Activated CD4-positive, alpha-beta memory T cell treated with anti-CD3 and anti-CD28 coated beads for 36 hours (primary cell): ENCODE measurements at regions of chr19 and their contacts with region 1.

Region 1: DNA sequence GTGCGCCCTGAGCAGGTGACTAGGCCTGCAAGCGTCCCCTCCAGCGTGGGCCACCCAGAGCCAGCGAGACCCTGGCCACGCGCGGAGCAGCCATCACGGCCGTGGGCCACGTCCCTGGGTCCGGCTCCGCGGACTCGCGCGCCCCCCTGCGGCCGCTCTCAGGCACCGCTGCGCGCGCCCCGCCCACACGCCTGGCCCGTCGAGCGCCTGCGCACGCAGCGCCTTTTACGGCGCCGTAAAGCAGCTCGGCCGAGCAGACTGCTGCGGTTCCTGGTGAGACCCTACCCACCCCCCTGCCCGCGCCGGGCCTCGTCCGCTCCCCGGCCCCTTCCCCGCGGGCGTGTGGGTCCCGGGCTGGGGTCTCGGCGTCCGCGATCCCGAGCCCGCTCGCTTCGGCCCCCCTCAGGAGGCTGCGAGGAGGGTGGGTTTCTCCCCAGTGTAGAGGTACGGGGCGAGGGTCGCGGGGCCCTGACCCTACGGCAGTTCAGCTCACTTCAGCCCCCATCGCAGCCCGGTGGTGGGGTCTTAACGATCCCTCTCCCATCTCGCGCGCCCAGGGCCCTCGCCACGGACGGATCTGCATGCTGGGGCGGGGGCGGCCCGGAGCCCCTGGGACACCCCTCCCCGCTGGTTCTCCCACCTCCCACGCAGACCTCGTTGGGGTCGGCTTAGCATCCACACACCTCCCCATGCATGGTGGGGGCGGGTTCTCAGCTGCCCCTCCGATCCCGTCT is at the start of gene TRAPPC5:
- DNase-seq: peak; percentile 91
- H3K4me3 Mint-ChIP-seq: peak within 1 kb of the TSS; percentile 88
- H3K27ac Mint-ChIP-seq: peak within 1 kb of the TSS; percentile 91
- H3K4me1 Mint-ChIP-seq: peaks cover 44% of the 10 kb centered on the region
- H3K27me3 Mint-ChIP-seq: peaks cover 23% of the 10 kb centered on the region
- total RNA-seq, gene TRAPPC5: 77.5 to 88.2 TPM

Region 2: GRCh38 chr19:7386308-7386707 is 294.5 kb before region 1 on chr19:
- CTCF ChIA-PET with region 1: interaction called, 11 read pairs
- POLR2A ChIA-PET with region 1: no interaction called
- intact Hi-C with region 1: loop called (anchors 10 kb)
- DNase-seq: peak; percentile 67
- H3K4me3 Mint-ChIP-seq: no peak overlapping the region
- H3K27ac Mint-ChIP-seq: peak overlapping the region; percentile 96
- H3K4me1 Mint-ChIP-seq: peaks cover 30% of the 10 kb centered on the region
- H3K27me3 Mint-ChIP-seq: no peaks in the 10 kb centered on the region

Region 3: GRCh38 chr19:7636691-7637373 is 43.9 kb before region 1 on chr19 and contains the start of gene STXBP2:
- CTCF ChIA-PET with region 1: interaction called, 9 read pairs
- POLR2A ChIA-PET with region 1: no interaction called
- intact Hi-C with region 1: loop called (anchors 5 kb)
- DNase-seq: peak; percentile 95
- H3K4me3 Mint-ChIP-seq: peak within 1 kb of the TSS; percentile 79
- H3K27ac Mint-ChIP-seq: peak within 1 kb of the TSS; percentile 79
- H3K4me1 Mint-ChIP-seq: peaks cover 29% of the 10 kb centered on the region
- H3K27me3 Mint-ChIP-seq: no peaks in the 10 kb centered on the region
- total RNA-seq, gene STXBP2: 109 to 111 TPM

Region 4: GRCh38 chr19:7658219-7658686 is 22.5 kb before region 1 on chr19:
- CTCF ChIA-PET with region 1: interaction called, 33 read pairs
- POLR2A ChIA-PET with region 1: no interaction called
- intact Hi-C with region 1: no loop called
- DNase-seq: peak; percentile 69
- H3K4me3 Mint-ChIP-seq: peak overlapping the region; percentile 65
- H3K27ac Mint-ChIP-seq: no peak overlapping the region
- H3K4me1 Mint-ChIP-seq: peaks cover 16% of the 10 kb centered on the region
- H3K27me3 Mint-ChIP-seq: no peaks in the 10 kb centered on the region

Region 5: DNA sequence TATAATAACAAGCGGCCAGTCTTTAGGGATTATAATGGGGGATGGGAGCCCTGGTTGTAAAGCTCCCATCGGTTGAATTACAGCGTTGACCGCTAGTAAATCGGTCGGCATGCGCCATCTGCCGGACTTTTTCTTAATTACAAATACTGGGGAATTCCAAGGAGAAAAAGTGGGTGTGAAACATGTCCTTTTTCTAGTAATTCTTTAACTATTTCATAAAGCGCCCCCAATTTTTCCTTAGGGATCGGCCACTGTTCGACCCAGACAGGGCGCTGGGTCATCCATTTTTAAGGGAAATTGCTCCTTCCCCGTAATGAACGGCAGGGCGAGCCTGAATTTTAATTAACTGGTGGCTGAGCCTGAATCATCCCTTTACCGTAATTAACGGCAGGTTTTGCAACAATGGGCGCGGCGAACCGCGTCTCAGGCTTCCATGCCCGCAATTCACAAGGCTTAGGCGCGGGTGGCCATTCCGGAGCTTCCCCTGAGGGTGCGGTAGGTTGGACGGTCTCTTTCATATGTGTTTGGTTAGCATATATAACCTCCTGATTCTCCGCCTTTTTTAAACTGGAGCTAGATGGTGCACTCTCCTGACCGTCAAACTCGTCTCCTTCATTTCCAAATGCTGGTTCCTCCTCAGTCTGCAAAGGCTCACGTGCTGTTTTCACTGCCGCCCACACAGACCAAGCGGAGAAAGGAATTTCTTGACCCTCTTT is 119.0 kb after region 1 on chr19:
- CTCF ChIA-PET with region 1: interaction called, 62 read pairs
- POLR2A ChIA-PET with region 1: interaction called, 3 read pairs
- intact Hi-C with region 1: loop called (anchors 1 kb)
- DNase-seq: peak; percentile 69
- H3K4me3 Mint-ChIP-seq: peak overlapping the region; percentile 39
- H3K27ac Mint-ChIP-seq: no peak overlapping the region
- H3K4me1 Mint-ChIP-seq: peaks cover 7% of the 10 kb centered on the region
- H3K27me3 Mint-ChIP-seq: peaks cover 25% of the 10 kb centered on the region

Region 6: DNA sequence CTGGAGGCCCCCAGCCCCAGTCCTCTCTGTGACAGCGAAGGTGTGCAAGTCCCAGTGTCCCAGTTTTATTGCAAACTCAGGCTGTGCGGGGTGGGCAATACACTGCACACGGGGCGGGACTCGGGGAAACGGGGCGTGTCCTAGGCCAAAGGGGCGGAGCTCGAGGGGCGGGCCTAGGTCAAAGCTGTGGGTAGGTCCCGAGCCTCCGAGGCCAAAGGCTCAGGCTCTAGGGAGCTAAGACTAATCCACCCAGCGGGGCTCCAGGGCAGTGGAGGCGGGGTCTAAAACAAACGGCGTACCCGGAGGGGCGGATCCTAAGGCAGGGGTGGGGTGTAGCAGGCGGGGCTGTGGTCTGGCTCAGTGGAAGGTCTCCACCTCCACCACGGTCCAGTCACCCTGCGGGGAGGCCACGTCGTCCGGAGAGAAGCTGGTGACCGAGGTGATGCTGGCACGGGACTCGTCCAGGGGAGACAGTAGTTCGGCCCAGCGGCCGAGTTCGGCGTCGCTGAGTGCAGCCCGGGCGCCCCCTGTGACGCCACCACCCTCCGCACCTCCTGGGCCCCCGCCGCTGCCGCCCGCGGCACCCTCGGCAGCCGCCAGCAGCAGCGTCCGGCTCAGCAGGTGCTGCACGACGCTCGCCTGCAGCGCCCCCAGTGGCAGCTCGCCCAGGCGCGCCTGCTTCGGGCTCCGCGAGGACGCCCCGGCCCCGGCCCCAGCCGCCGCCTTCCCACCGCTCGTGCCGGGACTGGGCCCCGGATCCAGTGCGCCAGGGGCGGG is 188.1 kb after region 1 on chr19:
- CTCF ChIA-PET with region 1: interaction called, 13 read pairs
- POLR2A ChIA-PET with region 1: no interaction called
- intact Hi-C with region 1: no loop called
- DNase-seq: peak; percentile 86
- H3K4me3 Mint-ChIP-seq: peak overlapping the region; percentile 73
- H3K27ac Mint-ChIP-seq: no peak overlapping the region
- H3K4me1 Mint-ChIP-seq: peaks cover 42% of the 10 kb centered on the region
- H3K27me3 Mint-ChIP-seq: peaks cover 29% of the 10 kb centered on the region